Activated CD8-positive, alpha-beta T cell treated with anti-CD3 and anti-CD28 coated beads for 36 hours (primary cell): ENCODE measurements at regions of chr6 and their contacts with region 1.

Region 1: GRCh38 chr6:30219244-30219643 is 6.0 kb upstream of the TRIM26 start:
- DNase-seq: peak; percentile 71
- ATAC-seq: peak; percentile 74
- H3K4me3 Mint-ChIP-seq: no peak overlapping the region
- H3K27ac Mint-ChIP-seq: no peak overlapping the region
- H3K4me1 Mint-ChIP-seq: peaks cover 17% of the 10 kb centered on the region
- H3K27me3 Mint-ChIP-seq: no peaks in the 10 kb centered on the region
- CTCF ChIP-seq: peak; percentile 87

Region 2: DNA sequence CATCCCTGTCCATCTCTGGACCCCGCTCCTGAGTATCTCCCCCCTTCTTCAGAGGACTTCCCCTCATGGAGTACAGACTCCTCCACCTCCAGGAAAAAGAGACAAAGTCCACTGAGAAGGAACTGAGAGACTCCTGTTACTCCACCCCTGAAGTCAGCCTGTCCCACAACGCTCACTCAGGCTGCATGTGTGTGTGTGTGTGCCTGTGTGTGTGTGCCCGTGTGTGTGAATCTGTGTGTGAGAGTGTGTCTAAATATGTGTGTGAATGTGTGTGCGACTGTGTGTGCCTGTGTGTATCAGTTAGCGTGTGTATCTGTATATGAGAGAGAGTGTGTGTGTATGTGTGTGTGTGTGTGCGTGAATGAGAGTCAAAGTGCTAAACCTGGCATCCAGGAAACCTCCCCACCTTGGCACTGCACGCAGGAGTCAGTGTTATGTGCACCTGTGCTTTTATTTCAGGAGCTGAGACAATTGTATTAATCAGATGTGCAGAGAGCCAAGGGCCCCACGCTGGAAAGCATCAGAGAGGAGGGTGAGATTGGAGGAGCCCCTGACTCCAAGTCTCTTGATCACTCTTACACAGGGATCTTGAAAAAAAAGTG is 237.9 kb before region 1 on chr6:
- CTCF ChIA-PET with region 1: no interaction called
- POLR2A ChIA-PET with region 1: no interaction called
- intact Hi-C with region 1: no loop called
- DNase-seq: no peak
- ATAC-seq: no peak
- H3K4me3 Mint-ChIP-seq: no peak overlapping the region
- H3K27ac Mint-ChIP-seq: no peak overlapping the region
- H3K4me1 Mint-ChIP-seq: peaks cover 6% of the 10 kb centered on the region
- H3K27me3 Mint-ChIP-seq: peaks cover 12% of the 10 kb centered on the region
- CTCF ChIP-seq: no peak

Region 3: GRCh38 chr6:30071876-30072275 is 147.4 kb before region 1 on chr6:
- CTCF ChIA-PET with region 1: no interaction called
- POLR2A ChIA-PET with region 1: no interaction called
- intact Hi-C with region 1: no loop called
- DNase-seq: no peak
- ATAC-seq: no peak
- H3K4me3 Mint-ChIP-seq: no peak overlapping the region
- H3K27ac Mint-ChIP-seq: no peak overlapping the region
- H3K4me1 Mint-ChIP-seq: peaks cover 37% of the 10 kb centered on the region
- H3K27me3 Mint-ChIP-seq: peaks cover 48% of the 10 kb centered on the region
- CTCF ChIP-seq: no peak

Region 4: GRCh38 chr6:30180145-30180544 is 39.1 kb before region 1 on chr6:
- CTCF ChIA-PET with region 1: no interaction called
- POLR2A ChIA-PET with region 1: no interaction called
- intact Hi-C with region 1: no loop called
- DNase-seq: no peak
- ATAC-seq: no peak
- H3K4me3 Mint-ChIP-seq: no peak overlapping the region
- H3K27ac Mint-ChIP-seq: no peak overlapping the region
- H3K4me1 Mint-ChIP-seq: no peaks in the 10 kb centered on the region
- H3K27me3 Mint-ChIP-seq: peaks cover 30% of the 10 kb centered on the region
- CTCF ChIP-seq: no peak

Region 5: DNA sequence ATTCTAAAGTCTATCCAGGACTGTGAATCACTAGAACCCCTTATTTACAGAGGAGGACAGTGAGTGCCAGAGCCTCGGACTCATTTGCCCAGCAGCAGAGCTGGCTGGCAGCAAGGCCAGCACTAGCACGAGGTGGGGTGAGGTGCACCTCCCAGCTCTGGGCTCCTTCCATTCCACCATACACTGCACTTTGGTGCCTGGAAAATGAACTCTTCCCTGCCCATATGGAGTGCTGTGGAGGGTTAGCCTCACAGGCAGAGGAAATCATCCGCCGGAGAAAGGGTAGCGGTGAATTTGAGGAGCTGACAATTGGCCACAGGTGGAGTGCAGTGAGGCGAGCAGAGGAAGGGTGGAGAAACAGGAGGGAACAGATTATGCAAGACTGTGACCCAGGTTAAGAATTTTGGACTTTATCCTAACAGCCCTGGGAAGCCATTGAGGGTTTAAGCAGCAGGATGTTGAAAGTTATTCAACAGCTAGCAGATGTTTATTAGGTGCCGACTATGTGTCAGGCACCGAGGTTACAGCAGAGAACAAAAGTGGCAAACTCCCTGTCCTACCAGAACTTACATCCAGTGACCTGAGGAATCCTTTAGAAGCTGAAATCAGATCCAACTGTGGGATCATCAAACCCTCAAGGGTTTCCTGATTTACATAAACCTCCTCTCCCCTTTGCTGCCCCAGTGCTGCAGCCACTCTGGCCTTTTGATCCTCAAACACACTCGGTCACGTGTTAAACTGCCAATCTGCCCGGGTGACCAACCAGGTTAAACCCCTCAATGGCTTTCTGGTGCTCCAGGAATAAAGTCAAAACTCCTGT is 12.2 kb before region 1 on chr6:
- CTCF ChIA-PET with region 1: interaction called, 25 read pairs
- POLR2A ChIA-PET with region 1: interaction called, 6 read pairs
- intact Hi-C with region 1: no loop called
- DNase-seq: no peak
- ATAC-seq: no peak
- H3K4me3 Mint-ChIP-seq: no peak overlapping the region
- H3K27ac Mint-ChIP-seq: no peak overlapping the region
- H3K4me1 Mint-ChIP-seq: peaks cover 66% of the 10 kb centered on the region
- H3K27me3 Mint-ChIP-seq: no peaks in the 10 kb centered on the region
- CTCF ChIP-seq: no peak

Region 6: DNA sequence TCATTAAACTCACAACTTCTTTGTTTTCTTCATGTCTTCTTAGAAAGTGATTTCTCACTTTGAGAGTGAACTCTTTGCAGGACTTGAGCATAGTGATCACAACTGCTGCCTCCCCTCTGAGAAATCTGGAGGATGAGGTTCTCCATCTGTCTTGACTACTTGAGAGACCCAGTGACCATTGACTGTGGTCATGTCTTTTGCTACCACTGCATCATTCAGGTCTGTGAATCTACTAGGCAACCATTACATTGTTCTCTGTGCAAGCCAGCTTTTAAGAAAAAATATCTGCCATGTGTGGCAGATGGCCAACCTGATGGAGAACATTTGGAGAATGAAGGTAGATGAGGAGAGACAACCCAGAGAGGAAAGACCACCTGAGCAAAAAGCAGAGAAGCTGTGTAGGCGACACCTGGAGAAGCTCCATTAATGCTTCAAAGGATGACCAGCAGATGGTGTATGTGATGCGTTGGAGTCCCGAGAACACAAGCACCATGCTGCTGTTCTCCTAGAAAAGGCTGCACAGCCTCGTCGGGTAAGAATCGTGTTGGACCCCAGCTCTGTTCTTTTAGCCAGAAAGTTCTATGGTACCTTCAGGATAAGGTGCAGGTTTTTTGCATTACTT is 19.0 kb after region 1 on chr6:
- CTCF ChIA-PET with region 1: interaction called, 20 read pairs
- POLR2A ChIA-PET with region 1: interaction called, 5 read pairs
- intact Hi-C with region 1: no loop called
- DNase-seq: peak; percentile 39
- ATAC-seq: peak; percentile 70
- H3K4me3 Mint-ChIP-seq: no peak overlapping the region
- H3K27ac Mint-ChIP-seq: no peak overlapping the region
- H3K4me1 Mint-ChIP-seq: no peaks in the 10 kb centered on the region
- H3K27me3 Mint-ChIP-seq: peaks cover 20% of the 10 kb centered on the region
- CTCF ChIP-seq: peak; percentile 44

Region 7: DNA sequence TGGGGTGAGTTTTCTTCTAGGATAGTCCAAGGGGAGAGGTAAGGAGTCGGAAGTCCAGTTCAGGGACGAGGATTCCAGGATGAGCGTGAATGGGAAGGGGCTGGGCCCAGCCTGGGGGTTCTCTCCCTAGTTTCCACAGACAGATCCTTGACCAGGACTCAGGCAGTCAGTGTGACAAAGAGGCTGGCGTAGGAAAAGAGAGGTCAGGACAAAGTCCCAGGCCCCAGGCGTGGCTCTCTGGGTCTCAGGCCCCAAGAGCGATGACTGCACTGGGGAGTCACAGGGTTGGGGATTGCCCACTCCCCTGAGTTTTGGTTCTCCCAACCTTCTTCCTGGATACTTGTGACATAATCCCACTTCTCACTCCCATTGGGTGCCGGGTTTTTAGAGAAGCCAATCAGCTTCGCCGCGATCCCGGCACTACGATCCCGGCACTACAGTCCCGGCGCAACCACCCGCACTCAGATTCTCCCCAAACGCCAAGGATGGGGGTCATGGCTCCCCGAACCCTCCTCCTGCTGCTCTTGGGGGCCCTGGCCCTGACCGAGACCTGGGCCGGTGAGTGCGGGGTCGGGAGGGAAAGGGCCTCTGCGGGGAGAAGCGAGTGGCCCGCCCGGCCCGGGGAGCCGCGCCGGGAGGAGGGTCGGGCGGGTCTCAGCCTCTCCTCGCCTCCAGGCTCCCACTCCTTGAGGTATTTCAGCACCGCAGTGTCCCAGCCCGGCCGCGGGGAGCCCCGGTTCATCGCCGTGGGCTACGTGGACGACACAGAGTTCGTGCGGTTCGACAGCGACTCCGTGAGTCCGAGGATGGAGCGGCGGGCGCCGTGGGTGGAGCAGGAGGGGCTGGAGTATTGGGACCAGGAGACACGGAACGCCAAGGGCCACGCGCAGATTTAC is 40.1 kb after region 1 on chr6:
- CTCF ChIA-PET with region 1: interaction called, 9 read pairs
- POLR2A ChIA-PET with region 1: interaction called, 4 read pairs
- intact Hi-C with region 1: loop called (anchors 2 kb)
- DNase-seq: peak; percentile 76
- ATAC-seq: peak; percentile 91
- H3K4me3 Mint-ChIP-seq: peak overlapping the region; percentile 84
- H3K27ac Mint-ChIP-seq: peak overlapping the region; percentile 84
- H3K4me1 Mint-ChIP-seq: peaks cover 20% of the 10 kb centered on the region
- H3K27me3 Mint-ChIP-seq: no peaks in the 10 kb centered on the region
- CTCF ChIP-seq: no peak

Region 8: GRCh38 chr6:30326526-30327260 is 107.4 kb after region 1 on chr6 and contains the start of gene TRIM39:
- CTCF ChIA-PET with region 1: interaction called, 14 read pairs
- POLR2A ChIA-PET with region 1: interaction called, 27 read pairs
- intact Hi-C with region 1: loop called (anchors 10 kb)
- DNase-seq: peak; percentile 92
- ATAC-seq: peak; percentile 63
- H3K4me3 Mint-ChIP-seq: peak within 1 kb of the TSS; percentile 94
- H3K27ac Mint-ChIP-seq: peak within 1 kb of the TSS; percentile 99
- H3K4me1 Mint-ChIP-seq: peaks cover 52% of the 10 kb centered on the region
- H3K27me3 Mint-ChIP-seq: no peaks in the 10 kb centered on the region
- CTCF ChIP-seq: no peak
- total RNA-seq, gene TRIM39: 21.6 to 22.3 TPM

Region 9: GRCh38 chr6:30357678-30358540 is 138.7 kb after region 1 on chr6:
- CTCF ChIA-PET with region 1: interaction called, 13 read pairs
- POLR2A ChIA-PET with region 1: no interaction called
- intact Hi-C with region 1: no loop called
- DNase-seq: peak; percentile 74
- ATAC-seq: peak; percentile 88
- H3K4me3 Mint-ChIP-seq: peak overlapping the region; percentile 75
- H3K27ac Mint-ChIP-seq: no peak overlapping the region
- H3K4me1 Mint-ChIP-seq: peaks cover 1% of the 10 kb centered on the region
- H3K27me3 Mint-ChIP-seq: peaks cover 41% of the 10 kb centered on the region
- CTCF ChIP-seq: peak; percentile 87

Region 10: DNA sequence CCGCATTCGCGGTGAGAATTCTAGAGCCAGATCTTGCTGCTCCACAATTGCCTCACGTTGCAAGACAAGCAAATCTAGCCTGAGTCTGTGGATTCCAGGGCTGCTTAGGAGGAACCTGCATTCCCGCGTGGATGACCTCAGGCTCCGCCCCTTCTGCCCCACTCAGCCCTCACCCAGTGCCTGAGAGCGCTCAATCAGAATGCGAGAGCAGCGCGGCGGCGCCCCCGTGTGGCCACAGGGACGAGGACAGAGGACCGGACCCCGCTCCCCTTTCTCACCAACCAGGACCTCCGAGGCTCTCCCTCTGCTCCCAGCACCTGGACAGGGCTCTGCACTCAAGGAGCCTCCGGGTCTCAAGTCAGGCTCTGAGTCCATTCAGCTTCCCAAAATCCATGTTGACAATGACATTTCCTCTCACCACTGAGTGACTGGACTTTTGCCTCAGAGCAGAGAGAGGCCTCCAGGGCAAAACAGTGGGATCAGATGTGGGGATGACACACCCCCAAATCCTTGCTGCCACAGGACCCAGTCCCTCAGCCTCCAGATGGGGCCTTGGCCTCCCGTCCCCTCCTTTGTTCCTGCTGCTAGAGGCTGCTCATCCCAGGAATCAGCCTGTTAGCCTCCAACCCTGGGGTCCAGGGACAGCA is 177.7 kb after region 1 on chr6:
- CTCF ChIA-PET with region 1: interaction called, 19 read pairs
- POLR2A ChIA-PET with region 1: interaction called, 3 read pairs
- intact Hi-C with region 1: loop called (anchors 2 kb)
- DNase-seq: peak; percentile 92
- ATAC-seq: peak; percentile 99
- H3K4me3 Mint-ChIP-seq: no peak overlapping the region
- H3K27ac Mint-ChIP-seq: no peak overlapping the region
- H3K4me1 Mint-ChIP-seq: peaks cover 4% of the 10 kb centered on the region
- H3K27me3 Mint-ChIP-seq: peaks cover 20% of the 10 kb centered on the region
- CTCF ChIP-seq: peak; percentile 95